ENCODE measurements at regions of chr11 and their contacts with region 1.

Region 1: DNA sequence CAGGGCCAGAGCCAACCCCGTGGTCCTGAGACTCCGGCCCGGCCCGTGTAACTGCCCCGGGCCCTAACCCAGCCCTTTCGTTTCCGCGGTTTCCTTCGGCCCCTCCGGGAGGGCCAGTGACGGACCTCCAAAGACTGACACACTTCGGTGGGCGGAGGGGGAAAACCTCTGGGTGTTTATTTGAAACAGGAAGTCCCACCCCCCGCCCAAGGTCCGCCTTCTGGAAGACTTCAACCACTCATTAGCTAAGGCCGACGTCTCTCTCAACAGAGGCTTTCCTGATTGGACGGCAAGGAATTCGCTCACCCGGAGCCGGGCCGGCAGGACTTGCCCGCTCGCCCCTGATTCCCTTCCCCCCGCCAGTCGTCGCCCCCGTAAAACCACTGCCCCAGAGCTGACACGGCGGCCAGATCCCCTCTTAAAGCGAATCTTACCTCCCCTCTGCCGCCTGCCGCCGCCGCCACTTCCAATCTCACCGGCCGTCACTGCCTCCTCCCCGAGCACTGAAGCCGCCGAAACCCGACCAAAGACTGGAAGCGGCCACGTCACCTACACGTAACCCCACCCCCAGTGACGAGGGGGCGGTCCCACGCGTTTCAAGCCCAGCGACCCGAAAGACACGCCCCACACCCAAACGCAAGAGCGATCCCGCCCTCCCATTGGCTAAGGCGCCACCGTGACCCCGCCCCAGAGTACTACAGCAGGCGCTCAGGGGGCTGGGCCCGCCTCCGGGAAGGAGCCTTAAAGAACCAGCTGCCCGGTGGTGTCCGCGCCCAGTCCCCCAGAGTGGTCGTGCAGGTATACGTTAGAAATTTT is at the start of gene STX5:
- DNase-seq: peak; percentile 97
- H3K4me3 ChIP-seq: peak within 1 kb of the TSS; percentile 85
- H3K27ac ChIP-seq: peak within 1 kb of the TSS; percentile 99
- H3K27me3 ChIP-seq: no peaks in the 10 kb centered on the region
- CTCF ChIP-seq: no peak
- polyA plus RNA-seq, gene STX5: 51.7 and 52.1 TPM in 2 replicates

Region 2: DNA sequence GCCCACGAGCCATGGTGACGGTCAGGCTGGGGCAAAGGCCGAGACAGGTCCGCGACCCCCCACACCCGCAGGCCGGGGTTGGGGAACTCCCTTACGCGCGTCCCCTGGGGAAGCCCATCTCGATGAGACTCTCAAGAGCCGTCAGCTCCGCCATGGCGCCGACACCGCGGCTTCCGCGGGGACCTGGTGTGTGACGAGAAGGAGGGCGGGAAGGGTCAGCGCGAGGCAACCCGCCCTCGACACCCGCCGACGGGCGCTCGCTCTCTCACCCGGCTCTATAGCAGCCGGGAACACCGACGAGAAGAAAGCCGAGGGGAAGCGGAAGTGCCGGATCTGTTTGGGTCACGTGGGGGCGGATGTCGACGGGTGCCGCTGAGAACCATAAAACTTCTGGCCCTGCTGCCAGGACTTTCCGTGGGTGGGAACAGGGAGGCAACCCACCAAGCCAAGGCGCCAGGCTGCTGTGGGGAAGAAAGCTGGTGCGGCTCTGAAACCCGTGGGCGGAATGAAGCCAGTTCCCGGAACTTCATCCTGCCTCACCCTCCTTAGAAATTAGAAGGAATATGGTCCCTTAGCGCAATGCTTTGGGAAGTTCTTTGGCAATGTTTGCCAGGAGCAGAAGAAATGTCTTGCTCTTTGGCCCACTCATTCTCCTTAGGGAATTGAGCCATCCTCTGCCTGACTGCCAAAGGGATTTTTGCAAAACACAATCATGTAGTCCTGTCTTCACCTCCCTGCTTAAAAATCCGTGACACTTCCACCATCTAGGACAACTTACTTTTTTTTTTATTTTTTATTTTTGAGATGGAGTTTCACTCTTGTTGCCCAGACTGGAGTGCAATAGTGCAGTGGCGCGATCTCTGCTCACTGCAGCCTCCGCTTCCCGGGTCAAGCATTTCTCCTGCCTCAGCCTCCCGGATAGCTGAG is 152.7 kb before region 1 on chr11 and contains the start of gene UBXN1:
- CTCF ChIA-PET with region 1: no interaction called
- POLR2A ChIA-PET with region 1: interaction called, 10 read pairs
- DNase-seq: peak; percentile 66
- H3K4me3 ChIP-seq: peak within 1 kb of the TSS; percentile 98
- H3K27ac ChIP-seq: peak within 1 kb of the TSS; percentile 80
- H3K27me3 ChIP-seq: no peaks in the 10 kb centered on the region
- CTCF ChIP-seq: no peak
- polyA plus RNA-seq, gene UBXN1: 92.8 and 100 TPM in 2 replicates

Region 3: GRCh38 chr11:62753736-62754603 is 77.8 kb before region 1 on chr11 and contains the start of gene ZBTB3:
- CTCF ChIA-PET with region 1: no interaction called
- POLR2A ChIA-PET with region 1: interaction called, 16 read pairs
- DNase-seq: peak; percentile 97
- H3K4me3 ChIP-seq: peak within 1 kb of the TSS; percentile 94
- H3K27ac ChIP-seq: peak within 1 kb of the TSS; percentile 80
- H3K27me3 ChIP-seq: no peaks in the 10 kb centered on the region
- CTCF ChIP-seq: no peak
- polyA plus RNA-seq, gene ZBTB3: 3.2 and 3.7 TPM in 2 replicates

Region 4: GRCh38 chr11:62805076-62805892 is 26.4 kb before region 1 on chr11 and contains the start of gene NXF1:
- CTCF ChIA-PET with region 1: no interaction called
- POLR2A ChIA-PET with region 1: interaction called, 33 read pairs
- DNase-seq: peak; percentile 87
- H3K4me3 ChIP-seq: peak within 1 kb of the TSS; percentile 96
- H3K27ac ChIP-seq: peak within 1 kb of the TSS; percentile 81
- H3K27me3 ChIP-seq: no peaks in the 10 kb centered on the region
- CTCF ChIP-seq: peak; percentile 14; the same call in 1 of the 2 replicates
- polyA plus RNA-seq, gene NXF1: 48.9 and 66.1 TPM in 2 replicates

Region 5: GRCh38 chr11:62880803-62881578 is 49.3 kb after region 1 on chr11 and contains the start of gene SLC3A2:
- CTCF ChIA-PET with region 1: no interaction called
- POLR2A ChIA-PET with region 1: interaction called, 10 read pairs
- DNase-seq: peak; percentile 56
- H3K4me3 ChIP-seq: peak within 1 kb of the TSS; percentile 100
- H3K27ac ChIP-seq: peak within 1 kb of the TSS; percentile 99
- H3K27me3 ChIP-seq: no peaks in the 10 kb centered on the region
- CTCF ChIP-seq: peak; percentile 50; the same call in 1 of the 2 replicates
- polyA plus RNA-seq, gene SLC3A2: 263 and 284 TPM in 2 replicates

Region 6: DNA sequence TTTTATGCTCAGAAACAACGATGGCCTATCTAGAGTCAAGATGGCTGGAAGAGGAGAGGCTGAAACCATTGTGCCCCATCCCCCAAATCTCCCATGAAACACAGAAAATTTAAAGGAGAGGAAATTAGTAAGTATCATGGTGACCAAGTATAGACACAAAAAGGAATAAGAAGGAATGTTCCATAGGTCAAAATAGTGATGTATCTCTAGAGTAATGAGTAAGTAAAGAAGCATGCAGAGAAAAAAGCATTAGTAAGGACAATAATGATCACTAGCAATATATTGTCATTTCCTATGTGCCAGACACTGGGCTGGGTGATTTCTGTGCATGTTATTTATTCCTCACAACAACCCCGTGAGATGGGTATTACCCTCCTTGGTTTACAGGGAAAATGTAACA is 314.9 kb after region 1 on chr11:
- CTCF ChIA-PET with region 1: no interaction called
- POLR2A ChIA-PET with region 1: no interaction called
- DNase-seq: no peak
- H3K4me3 ChIP-seq: no peak overlapping the region
- H3K27ac ChIP-seq: no peak overlapping the region
- H3K27me3 ChIP-seq: no peaks in the 10 kb centered on the region
- CTCF ChIP-seq: no peak

Measured in AG04450 (cell line).